Endothelial cell of umbilical vein (primary cell): ENCODE measurements at regions of chr19 and their contacts with region 1.

Region 1: DNA sequence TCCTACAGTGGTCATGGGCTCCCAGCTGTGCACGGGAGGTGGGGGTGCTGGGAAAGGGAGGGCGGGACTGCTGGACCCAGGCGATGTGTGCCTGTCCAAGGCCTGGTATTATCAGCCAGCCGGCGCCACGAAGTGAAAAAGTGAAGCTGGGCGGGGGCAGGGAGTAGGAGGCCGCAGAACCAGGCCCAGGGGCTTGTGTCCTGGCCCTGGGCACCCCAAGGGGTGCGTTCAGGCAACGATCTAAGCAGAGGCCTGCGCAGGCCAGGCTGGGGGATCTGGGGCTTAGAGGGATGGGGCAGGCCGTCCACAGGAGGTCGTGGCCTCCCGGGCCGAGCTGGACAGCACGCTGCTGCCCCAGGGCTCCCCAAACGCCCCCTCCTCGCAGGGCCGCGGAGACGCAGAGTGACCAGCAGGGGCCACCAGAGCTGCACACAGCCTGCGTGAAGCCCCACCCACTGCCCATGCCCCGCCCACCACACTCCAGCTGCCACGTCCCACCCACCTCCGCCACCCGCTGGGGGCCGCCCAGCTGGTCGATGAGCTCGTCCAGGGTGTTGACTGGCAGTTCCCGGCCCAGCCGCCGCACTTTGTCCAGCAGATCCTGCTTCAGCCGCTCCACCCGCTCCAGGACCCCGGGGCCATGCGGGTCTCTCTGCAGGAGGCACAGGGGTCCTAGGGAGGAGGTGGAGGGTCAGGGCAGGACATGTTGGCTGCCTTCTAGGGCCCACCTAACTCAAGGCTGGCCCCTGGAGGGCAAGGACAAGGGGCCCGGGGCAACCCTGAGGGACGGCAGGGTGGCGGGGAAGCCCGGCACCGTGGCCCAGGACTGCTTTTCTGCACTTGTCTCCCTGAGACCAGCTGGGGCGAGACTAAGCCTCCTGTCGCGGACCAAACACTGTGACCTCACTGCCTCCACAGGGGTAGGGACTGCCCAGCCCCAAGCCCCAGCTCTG is 9.5 kb downstream of the GPX4 start:
- DNase-seq: peak; percentile 93
- H3K4me3 ChIP-seq: no peak overlapping the region
- H3K27ac ChIP-seq: no peak overlapping the region
- H3K4me1 ChIP-seq: peaks cover 5% of the 10 kb centered on the region
- H3K27me3 ChIP-seq: no peaks in the 10 kb centered on the region
- CTCF ChIP-seq: peak; percentile 79 to 94
- POLR2A ChIP-seq: peak; percentile 56

Region 2: DNA sequence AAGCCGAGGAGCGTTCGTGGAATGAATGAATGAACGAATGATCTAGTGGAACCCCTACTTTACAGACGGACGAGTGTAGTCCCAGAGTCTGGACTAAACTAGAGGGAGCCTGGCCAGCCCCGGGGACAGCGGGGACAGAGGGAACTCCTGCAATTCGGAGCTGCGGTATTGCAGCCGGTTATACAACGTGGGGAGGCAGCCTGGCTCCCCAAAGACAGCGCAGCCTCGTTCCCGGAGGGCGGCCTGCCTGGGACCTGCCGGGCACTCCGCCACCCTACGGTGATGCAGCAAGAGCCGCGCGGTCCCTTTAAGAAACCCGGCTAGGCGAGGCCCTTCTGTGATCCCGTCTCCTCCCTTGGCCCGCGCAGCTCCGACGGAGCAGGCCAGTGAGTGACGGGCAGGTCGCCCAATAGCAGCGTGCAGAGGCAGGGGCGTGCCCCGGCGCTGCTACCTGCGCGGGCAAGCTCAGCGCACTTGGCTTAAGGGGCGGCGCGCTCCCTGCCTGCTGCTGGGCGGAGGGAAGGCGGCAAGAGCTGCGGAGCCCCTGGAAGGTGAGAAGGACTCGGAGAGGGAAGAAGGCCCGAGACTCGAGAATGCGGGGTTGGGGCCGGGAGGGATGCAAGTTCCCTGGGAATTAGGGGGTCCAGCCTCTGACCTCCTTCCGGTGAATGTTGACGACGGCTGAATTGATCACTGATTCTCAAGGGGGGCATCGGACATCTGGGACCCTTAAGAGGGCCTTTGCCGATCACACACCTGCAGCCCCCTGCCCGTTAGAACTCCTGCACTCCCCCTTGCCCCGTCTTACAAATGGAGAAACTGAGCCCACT is 73.4 kb before region 1 on chr19 and contains the start of gene ABCA7:
- CTCF ChIA-PET with region 1: no interaction called
- POLR2A ChIA-PET with region 1: no interaction called
- dilution Hi-C with region 1: no loop called
- intact Hi-C with region 1: no loop called
- DNase-seq: peak; percentile 98
- H3K4me3 ChIP-seq: peak within 1 kb of the TSS; percentile 6 to 51 (median 51)
- H3K27ac ChIP-seq: no peak within 1 kb of the TSS
- H3K4me1 ChIP-seq: peaks cover 25% of the 10 kb centered on the region
- H3K27me3 ChIP-seq: no peaks in the 10 kb centered on the region
- CTCF ChIP-seq: no peak
- POLR2A ChIP-seq: peak; percentile 44
- total RNA-seq, gene ABCA7: 9.8 and 11.0 TPM in 2 replicates

Region 3: DNA sequence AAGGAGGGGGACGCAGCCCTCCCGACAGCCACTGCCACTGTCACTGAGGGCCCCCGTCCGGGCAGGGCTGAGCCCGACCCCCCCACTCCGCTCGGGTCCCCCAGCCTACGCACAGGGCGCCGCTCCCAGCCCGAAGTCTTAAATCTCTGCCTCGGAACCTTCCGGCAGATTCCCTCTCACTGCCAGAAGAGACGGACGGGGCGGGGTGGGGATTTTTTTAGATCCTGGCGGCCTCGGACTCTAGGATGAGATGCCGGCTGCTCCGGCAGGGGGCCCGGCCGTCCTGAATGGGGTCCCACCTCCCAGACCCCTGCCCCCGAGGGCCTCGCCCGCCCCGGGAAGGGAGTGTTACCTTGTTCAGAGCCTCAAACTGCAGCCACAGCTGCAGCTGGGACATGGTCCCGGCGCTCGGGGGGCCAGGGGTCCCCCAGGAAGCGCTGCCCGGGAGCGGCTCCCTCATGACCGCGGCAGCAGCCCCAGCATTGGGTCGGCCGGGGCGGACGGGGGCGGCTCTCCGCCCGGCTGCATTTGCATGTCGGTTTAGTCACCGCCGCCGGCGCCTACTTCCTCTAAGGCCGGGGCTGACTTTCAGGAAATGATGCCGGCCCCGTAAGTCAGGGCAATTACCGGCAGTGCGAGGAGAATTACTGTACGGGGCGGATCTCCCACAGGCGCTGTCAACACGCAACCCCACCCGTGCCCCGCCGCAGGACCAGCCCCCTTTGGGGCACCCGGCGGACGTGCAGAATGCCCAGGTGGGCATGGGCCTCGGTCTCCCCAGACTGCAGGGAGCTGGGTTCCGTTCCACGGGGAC is 18.6 kb after region 1 on chr19:
- CTCF ChIA-PET with region 1: interaction called, 20 read pairs
- POLR2A ChIA-PET with region 1: no interaction called
- dilution Hi-C with region 1: no loop called
- intact Hi-C with region 1: no loop called
- DNase-seq: peak; percentile 90
- H3K4me3 ChIP-seq: peak overlapping the region; percentile 64 to 81 (median 79)
- H3K27ac ChIP-seq: peak overlapping the region; percentile 92
- H3K4me1 ChIP-seq: peaks cover 20% of the 10 kb centered on the region
- H3K27me3 ChIP-seq: no peaks in the 10 kb centered on the region
- CTCF ChIP-seq: peak; percentile 6 to 13
- POLR2A ChIP-seq: peak; percentile 82

Region 4: GRCh38 chr19:1189419-1189818 is 76.1 kb after region 1 on chr19:
- CTCF ChIA-PET with region 1: interaction called, 80 read pairs
- POLR2A ChIA-PET with region 1: interaction called, 7 read pairs
- dilution Hi-C with region 1: no loop called
- intact Hi-C with region 1: loop called (anchors 5 kb)
- DNase-seq: no peak
- H3K4me3 ChIP-seq: no peak overlapping the region
- H3K27ac ChIP-seq: no peak overlapping the region
- H3K4me1 ChIP-seq: peaks cover 2% of the 10 kb centered on the region
- H3K27me3 ChIP-seq: no peaks in the 10 kb centered on the region
- CTCF ChIP-seq: no peak
- POLR2A ChIP-seq: no peak

Region 5: GRCh38 chr19:1205114-1206062 is 92.1 kb after region 1 on chr19 and contains the start of gene STK11:
- CTCF ChIA-PET with region 1: interaction called, 11 read pairs
- POLR2A ChIA-PET with region 1: no interaction called
- dilution Hi-C with region 1: no loop called
- intact Hi-C with region 1: no loop called
- DNase-seq: peak; percentile 97
- H3K4me3 ChIP-seq: peak within 1 kb of the TSS; percentile 76 to 88 (median 86)
- H3K27ac ChIP-seq: peak within 1 kb of the TSS; percentile 35
- H3K4me1 ChIP-seq: peaks cover 22% of the 10 kb centered on the region
- H3K27me3 ChIP-seq: no peaks in the 10 kb centered on the region
- CTCF ChIP-seq: no peak
- POLR2A ChIP-seq: peak; percentile 64
- total RNA-seq, gene STK11: 67.1 and 75.4 TPM in 2 replicates

Region 6: DNA sequence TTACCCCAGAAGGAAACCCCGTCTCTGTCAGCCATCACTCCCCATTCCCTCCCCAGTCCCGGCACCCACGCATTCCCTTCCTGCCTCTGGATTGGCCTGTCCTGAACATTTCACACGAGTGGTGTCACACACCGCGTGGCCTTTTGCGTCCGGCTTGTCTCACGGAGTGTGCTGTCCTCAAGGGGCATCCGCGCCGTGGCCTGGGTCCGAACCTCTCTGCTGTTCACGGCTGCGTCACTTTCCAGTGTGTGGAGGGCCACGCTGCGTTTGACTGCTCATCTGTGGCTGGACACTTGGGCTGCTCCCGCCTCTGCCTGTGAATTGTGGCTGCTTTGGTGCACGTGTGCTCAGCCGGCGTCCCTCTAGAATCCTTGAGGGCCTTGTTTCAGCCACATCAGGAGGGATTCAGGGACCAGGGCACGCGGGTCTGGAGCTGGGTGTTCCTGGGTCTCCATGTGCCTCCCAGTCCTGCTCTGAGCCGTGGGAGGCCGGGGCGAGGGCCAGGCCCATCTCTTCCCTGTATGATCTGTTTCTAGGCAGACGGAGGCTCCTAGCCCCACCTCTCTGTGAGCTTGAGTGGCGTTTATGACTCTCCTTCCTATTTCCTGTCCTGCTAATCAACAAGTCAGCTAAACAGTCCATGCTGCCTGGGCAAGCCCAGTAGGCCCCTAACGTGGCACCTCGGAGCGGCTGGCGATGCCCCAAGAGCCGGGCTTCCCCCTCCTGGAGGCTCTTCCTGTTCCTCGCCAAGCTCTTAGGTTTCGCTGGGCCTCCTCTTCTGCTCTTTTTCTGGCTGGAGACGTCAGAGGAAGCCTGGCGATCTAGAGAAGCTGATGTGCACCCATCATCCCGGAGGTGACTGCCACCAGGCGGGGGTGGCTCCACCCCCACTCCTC is 100.3 kb after region 1 on chr19:
- CTCF ChIA-PET with region 1: interaction called, 13 read pairs
- POLR2A ChIA-PET with region 1: interaction called, 3 read pairs
- dilution Hi-C with region 1: no loop called
- intact Hi-C with region 1: no loop called
- DNase-seq: peak; percentile 96
- H3K4me3 ChIP-seq: no peak overlapping the region
- H3K27ac ChIP-seq: peak overlapping the region; percentile 48
- H3K4me1 ChIP-seq: peaks cover 31% of the 10 kb centered on the region
- H3K27me3 ChIP-seq: no peaks in the 10 kb centered on the region
- CTCF ChIP-seq: no peak
- POLR2A ChIP-seq: peak; percentile 27